Lower leg skin (tissue), 4 donors: ENCODE measurements at regions of chr4 and their contacts with region 1.

Region 1: DNA sequence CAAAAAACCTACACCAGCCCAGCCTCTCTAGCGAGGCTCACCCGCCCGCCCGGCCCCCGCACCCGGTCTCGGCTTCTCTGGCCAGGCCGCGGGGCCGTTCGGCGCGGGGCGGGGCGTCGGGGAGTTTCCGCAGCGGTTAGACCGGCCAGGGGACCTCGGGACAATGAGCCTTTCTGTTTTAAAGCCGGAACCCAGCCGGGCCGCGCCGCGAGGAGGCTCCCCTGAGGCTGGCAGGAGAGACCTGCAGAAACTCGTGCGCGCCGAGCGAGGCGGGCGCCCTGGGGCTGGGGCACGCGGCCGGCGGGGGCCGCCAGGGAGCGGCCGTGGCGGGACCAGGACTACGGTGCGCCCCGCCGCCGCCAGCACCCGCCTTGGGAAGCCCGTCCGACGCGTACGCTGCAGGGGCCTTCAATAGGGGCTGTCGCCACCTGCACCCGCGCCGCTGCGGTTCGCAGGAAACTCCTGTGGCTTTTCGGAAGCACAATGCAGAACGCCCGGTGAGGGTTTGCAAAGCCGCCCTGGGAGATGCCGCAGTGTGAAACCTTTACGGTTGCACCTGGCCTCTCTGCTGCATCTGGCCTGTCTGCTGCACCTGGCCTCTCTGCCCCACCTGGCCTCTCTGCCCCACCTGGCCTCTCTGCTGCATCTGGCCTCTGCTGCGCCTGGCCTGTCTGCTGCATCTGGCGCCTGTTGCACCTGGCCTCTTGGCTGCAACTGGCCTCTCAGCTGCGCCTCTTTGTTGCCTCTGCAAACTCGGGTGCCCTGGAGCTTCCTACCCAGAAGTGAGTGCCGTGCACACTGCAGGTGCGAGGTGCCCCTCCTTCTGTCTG is 63.9 kb downstream of the TRAPPC11 start:
- DNase-seq: peak in 1 of 2 donors; percentile 94
- H3K4me3 ChIP-seq: peak overlapping the region; percentile 32
- CTCF ChIP-seq: no peak
- POLR2A ChIP-seq: no peak

Region 2: DNA sequence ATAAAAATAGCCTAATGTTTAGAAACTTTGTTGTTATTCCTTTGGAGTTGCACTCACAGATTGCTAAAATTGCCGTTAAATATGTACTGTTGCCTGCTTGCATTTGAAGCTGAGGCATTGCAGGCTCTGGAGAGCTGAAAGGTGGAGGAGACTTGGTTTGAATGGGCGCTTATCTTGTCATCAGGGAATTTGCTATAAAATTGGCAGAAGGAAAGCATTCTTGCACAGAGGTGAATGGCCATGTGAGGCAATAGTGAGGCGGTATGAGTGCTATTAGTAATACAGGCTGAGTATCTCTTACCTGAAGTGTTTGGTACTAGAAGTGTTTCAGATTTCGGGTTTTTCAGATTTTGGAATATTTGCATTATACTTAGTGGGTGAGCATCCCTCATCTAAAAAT is 22.5 kb before region 1 on chr4:
- intact Hi-C with region 1: loop called (anchors 1 kb)
- DNase-seq: no peak
- H3K4me3 ChIP-seq: no peak overlapping the region
- CTCF ChIP-seq: no peak
- POLR2A ChIP-seq: no peak

Region 3: GRCh38 chr4:184420881-184421416 is 698.0 kb after region 1 on chr4:
- intact Hi-C with region 1: no loop called
- DNase-seq: no peak
- H3K4me3 ChIP-seq: no peak overlapping the region
- CTCF ChIP-seq: no peak
- POLR2A ChIP-seq: no peak